CD14-positive monocyte (primary cell): ENCODE measurements at regions of chr9 and their contacts with region 1.

Region 1: GRCh38 chr9:133459476-133460404 is at the start of gene CACFD1:
- DNase-seq: peak; percentile 86 to 88 (median 88)
- H3K4me3 ChIP-seq: peak within 1 kb of the TSS; percentile 62 to 92 (median 63)
- H3K4me3 Mint-ChIP-seq: peak within 1 kb of the TSS; percentile 82 to 92
- H3K27ac ChIP-seq: peak within 1 kb of the TSS; percentile 14 to 79
- H3K27ac Mint-ChIP-seq: peak within 1 kb of the TSS; percentile 77 to 94 (median 89)
- H3K4me1 ChIP-seq: peaks cover 17 to 22% of the 10 kb centered on the region in 2 donors
- H3K4me1 Mint-ChIP-seq: peaks cover 21% of the 10 kb centered on the region
- H3K27me3 ChIP-seq: peaks cover 0 to 9% of the 10 kb centered on the region in 2 donors
- H3K27me3 Mint-ChIP-seq: peaks cover 13 to 38% (median 15%) of the 10 kb centered on the region in 3 donors
- CTCF ChIP-seq: no peak
- polyA plus RNA-seq, gene CACFD1: 5.0 to 6.7 (median 5.1) TPM

Region 2: DNA sequence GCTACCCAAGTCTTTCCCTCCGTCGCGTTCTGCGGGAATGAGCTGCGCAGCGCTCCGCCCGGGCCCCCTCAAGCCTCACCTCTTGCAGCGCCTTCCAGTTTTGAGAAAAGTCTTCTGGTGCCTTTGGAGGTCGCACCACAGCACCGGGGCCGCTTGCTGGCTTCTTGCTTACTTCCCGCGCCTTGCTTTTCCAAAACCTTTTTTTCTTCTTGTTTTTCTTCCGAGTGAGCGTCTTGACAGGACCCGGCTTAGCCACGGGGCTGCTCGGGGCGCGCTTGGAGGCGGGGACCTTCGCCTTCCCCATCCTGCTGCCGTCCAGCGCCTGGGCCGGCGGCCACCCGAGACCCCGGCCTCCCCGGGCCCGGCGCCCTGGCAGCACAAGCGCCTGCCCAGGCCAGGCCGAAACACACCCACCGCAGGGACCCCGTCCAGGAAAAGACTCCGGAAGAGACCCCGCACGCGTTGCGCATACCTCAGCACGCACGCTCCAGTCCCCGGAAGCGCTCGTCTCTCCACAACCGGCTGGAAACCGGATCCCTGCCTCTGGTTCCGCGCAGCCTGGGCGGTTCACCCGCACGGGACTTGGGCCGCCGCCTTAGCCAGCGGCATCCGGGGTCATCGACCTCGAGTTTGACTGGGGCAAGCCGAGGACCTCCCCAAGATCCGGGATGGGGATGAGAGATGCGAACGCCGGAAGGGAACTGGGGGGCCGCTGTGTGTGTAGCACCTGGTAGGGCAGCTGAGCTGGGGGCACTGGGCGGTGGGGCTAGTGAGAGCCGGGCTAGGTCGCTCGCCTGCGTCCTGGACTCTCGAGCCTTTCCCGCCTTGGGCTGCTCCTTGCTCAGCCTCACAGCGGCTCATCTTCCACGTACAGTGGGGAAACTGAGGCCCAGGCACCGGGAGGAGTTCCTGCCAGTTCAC is 41.9 kb before region 1 on chr9 and contains the start of gene REXO4:
- intact Hi-C with region 1: loop called in 1 of 2 experiments (anchors 5 kb)
- DNase-seq: peak; percentile 75 to 78 (median 77)
- H3K4me3 ChIP-seq: peak within 1 kb of the TSS; percentile 58 to 94 (median 83)
- H3K4me3 Mint-ChIP-seq: peak within 1 kb of the TSS; percentile 92 to 96
- H3K27ac ChIP-seq: peak within 1 kb of the TSS; percentile 75 to 82
- H3K27ac Mint-ChIP-seq: peak within 1 kb of the TSS; percentile 73 to 93 (median 86)
- H3K4me1 ChIP-seq: peaks cover 21 to 26% of the 10 kb centered on the region in 2 donors
- H3K4me1 Mint-ChIP-seq: peaks cover 34% of the 10 kb centered on the region
- H3K27me3 ChIP-seq: no peaks in the 10 kb centered on the region
- H3K27me3 Mint-ChIP-seq: peaks cover 0 to 4% (median 1%) of the 10 kb centered on the region in 3 donors
- CTCF ChIP-seq: no peak
- polyA plus RNA-seq, gene REXO4: 3.0 to 11.0 (median 4.2) TPM

Region 3: GRCh38 chr9:133478851-133479711 is 19.3 kb after region 1 on chr9 and contains the start of gene SLC2A6:
- intact Hi-C with region 1: loop called in 1 of 2 experiments (anchors 1 kb)
- DNase-seq: peak; percentile 70 to 87 (median 86)
- H3K4me3 ChIP-seq: peak within 1 kb of the TSS; percentile 74 to 95 (median 90)
- H3K4me3 Mint-ChIP-seq: peak within 1 kb of the TSS; percentile 84 to 92
- H3K27ac ChIP-seq: peak within 1 kb of the TSS; percentile 90 to 93
- H3K27ac Mint-ChIP-seq: peak within 1 kb of the TSS; percentile 78 to 99 (median 95)
- H3K4me1 ChIP-seq: peaks cover 52 to 57% of the 10 kb centered on the region in 2 donors
- H3K4me1 Mint-ChIP-seq: peaks cover 44% of the 10 kb centered on the region
- H3K27me3 ChIP-seq: peaks cover 0 to 15% of the 10 kb centered on the region in 2 donors
- H3K27me3 Mint-ChIP-seq: peaks cover 27 to 40% (median 33%) of the 10 kb centered on the region in 3 donors
- CTCF ChIP-seq: no peak
- polyA plus RNA-seq, gene SLC2A6: 43.2 to 127 (median 60.4) TPM

Region 4: GRCh38 chr9:134024828-134025605 is 565.3 kb after region 1 on chr9 and contains the start of gene BRD3OS:
- intact Hi-C with region 1: loop called in 1 of 2 experiments (anchors 10 kb)
- DNase-seq: peak; percentile 95 to 99 (median 99)
- H3K4me3 ChIP-seq: peak within 1 kb of the TSS; percentile 63 to 80 (median 70)
- H3K4me3 Mint-ChIP-seq: peak within 1 kb of the TSS; percentile 77 to 88
- H3K27ac ChIP-seq: no peak within 1 kb of the TSS
- H3K27ac Mint-ChIP-seq: peak within 1 kb of the TSS in 5 of 7 donors; percentile 24 to 89 (median 50)
- H3K4me1 ChIP-seq: peaks cover 12 to 13% of the 10 kb centered on the region in 2 donors
- H3K4me1 Mint-ChIP-seq: peaks cover 13% of the 10 kb centered on the region
- H3K27me3 ChIP-seq: no peaks in the 10 kb centered on the region
- H3K27me3 Mint-ChIP-seq: peaks cover 0 to 3% (median 1%) of the 10 kb centered on the region in 3 donors
- CTCF ChIP-seq: no peak
- polyA plus RNA-seq, gene BRD3OS: 2.9 to 6.8 (median 6.6) TPM